AG04450 (cell line): ENCODE measurements at regions of chr3 and their contacts with region 1.

Region 1: GRCh38 chr3:86774082-86774691 is 216.8 kb downstream of the VGLL3 start:
- DNase-seq: no peak
- H3K4me3 ChIP-seq: no peak overlapping the region
- H3K27ac ChIP-seq: no peak overlapping the region
- H3K27me3 ChIP-seq: no peaks in the 10 kb centered on the region
- CTCF ChIP-seq: peak; percentile 57

Region 2: DNA sequence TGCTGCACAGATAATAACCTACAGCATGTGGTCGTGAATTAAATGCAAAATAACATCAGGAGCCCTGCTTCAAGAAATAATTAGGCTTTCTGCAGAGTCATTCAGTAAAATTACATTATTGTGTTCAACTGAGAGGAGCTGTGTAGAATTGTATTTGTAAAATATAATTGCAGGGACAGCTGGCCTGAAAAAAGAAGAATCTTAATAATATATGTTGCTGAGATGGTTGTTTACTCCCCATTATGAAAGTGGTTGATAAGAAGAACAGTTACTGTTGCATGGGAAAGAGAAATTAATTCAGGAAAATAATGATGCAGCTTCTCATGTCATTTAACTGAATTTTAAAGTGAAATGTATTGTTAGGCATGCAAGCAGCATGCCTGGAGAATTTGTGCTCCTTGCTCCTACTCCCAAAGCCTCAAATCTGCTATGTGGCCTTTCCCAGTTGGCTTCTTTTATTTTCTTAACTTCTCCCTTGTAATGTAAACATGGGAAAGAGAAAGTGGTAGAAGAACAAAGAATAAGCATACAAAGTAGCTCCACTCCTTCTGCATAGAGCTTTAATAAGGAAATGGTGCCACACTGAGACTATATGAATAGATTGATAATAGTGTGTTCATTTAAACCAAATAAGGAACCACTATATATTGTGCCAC is 116.7 kb after region 1 on chr3:
- CTCF ChIA-PET with region 1: no interaction called
- POLR2A ChIA-PET with region 1: no interaction called
- DNase-seq: no peak
- H3K4me3 ChIP-seq: no peak overlapping the region
- H3K27ac ChIP-seq: no peak overlapping the region
- H3K27me3 ChIP-seq: no peaks in the 10 kb centered on the region
- CTCF ChIP-seq: no peak

Region 3: GRCh38 chr3:87145553-87145952 is 371.4 kb after region 1 on chr3:
- CTCF ChIA-PET with region 1: interaction called, 44 read pairs
- POLR2A ChIA-PET with region 1: no interaction called
- DNase-seq: no peak
- H3K4me3 ChIP-seq: no peak overlapping the region
- H3K27ac ChIP-seq: no peak overlapping the region
- H3K27me3 ChIP-seq: no peaks in the 10 kb centered on the region
- CTCF ChIP-seq: peak; percentile 44